Posterior vena cava (tissue), 2 donors: ENCODE measurements at regions of chr10 and their contacts with region 1.

Region 1: DNA sequence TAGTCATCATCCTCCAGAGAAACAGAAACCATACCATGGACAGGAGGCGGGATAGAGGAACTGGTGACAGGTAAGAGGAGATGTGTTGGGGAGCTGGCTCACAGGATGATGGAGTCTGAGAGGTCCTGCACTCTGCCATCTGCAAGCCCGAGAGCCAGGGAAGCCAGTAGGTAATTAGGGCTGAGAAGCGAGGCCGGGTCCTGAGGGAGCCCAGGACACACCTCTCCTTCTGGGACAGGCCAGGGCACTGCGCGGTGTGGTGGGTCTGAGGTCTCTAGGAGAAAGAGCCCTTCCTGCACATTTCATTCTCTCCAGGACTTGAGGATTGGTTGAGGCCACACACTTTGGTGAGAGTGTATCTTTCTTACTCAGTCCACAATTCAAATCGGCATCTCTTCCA is 415.5 kb downstream of the GLRX3 start:
- DNase-seq: no peak

Region 2: GRCh38 chr10:130513686-130514476 is 37.8 kb before region 1 on chr10:
- intact Hi-C with region 1: loop called in 1 of 2 experiments (anchors 1 kb)
- DNase-seq: no peak